Activated T-helper 2 cell treated with anti-CD3 and anti-CD28 coated beads, Interferon-gamma antibody, Interleukin-2, Interleukin-4, amounts not matched to agents 10 μg/mL and 5 μg/mL and 100 μg/mL, durations not matched to agents 14 hours and 24 hours and 36 hours (primary cell): ENCODE measurements at regions of chr7 and their contacts with region 1.

Region 1: GRCh38 chr7:87188930-87189329 is 30.6 kb downstream of the TMEM243 start:
- DNase-seq: no peak
- H3K4me3 Mint-ChIP-seq: no peak overlapping the region
- H3K27ac Mint-ChIP-seq: no peak overlapping the region
- H3K4me1 Mint-ChIP-seq: peaks cover 16% of the 10 kb centered on the region
- H3K27me3 Mint-ChIP-seq: no peaks in the 10 kb centered on the region

Region 2: DNA sequence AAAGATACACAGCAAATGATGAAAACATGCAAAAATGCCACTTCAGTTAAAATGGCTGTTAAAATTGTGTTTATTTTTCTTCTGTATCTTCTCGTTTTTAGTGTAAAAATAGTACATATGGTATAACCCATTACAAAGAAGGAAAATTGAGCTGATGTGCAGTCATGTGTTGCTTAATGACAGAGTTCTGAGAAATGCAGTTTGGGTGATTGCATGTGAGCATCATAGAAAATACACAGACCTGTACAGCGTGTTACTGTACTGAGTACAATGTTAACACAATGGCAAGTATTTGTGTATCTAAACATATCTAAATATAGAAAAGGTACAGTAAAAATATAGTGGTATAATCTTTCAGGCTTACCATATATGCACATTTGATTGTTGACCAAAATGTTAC is 29.4 kb before region 1 on chr7:
- intact Hi-C with region 1: loop called (anchors 5 kb)
- DNase-seq: no peak
- H3K4me3 Mint-ChIP-seq: no peak overlapping the region
- H3K27ac Mint-ChIP-seq: no peak overlapping the region
- H3K4me1 Mint-ChIP-seq: peaks cover 33% of the 10 kb centered on the region
- H3K27me3 Mint-ChIP-seq: no peaks in the 10 kb centered on the region

Region 3: GRCh38 chr7:87225696-87226095 is 36.8 kb after region 1 on chr7:
- intact Hi-C with region 1: loop called (anchors 5 kb)
- DNase-seq: no peak
- H3K4me3 Mint-ChIP-seq: no peak overlapping the region
- H3K27ac Mint-ChIP-seq: no peak overlapping the region
- H3K4me1 Mint-ChIP-seq: peaks cover 14% of the 10 kb centered on the region
- H3K27me3 Mint-ChIP-seq: peaks cover 21% of the 10 kb centered on the region